GM12878 (cell line): ENCODE measurements at regions of chr3 and their contacts with region 1.

Region 1: GRCh38 chr3:159988617-159989271 is at the start of gene IL12A:
- DNase-seq: peak; percentile 72
- ATAC-seq: peak; percentile 92
- H3K4me3 ChIP-seq: peak within 1 kb of the TSS; percentile 74
- H3K27ac ChIP-seq: peak within 1 kb of the TSS; percentile 75
- H3K4me1 ChIP-seq: peaks cover 17% of the 10 kb centered on the region
- H3K27me3 ChIP-seq: no peaks in the 10 kb centered on the region
- CTCF ChIP-seq: peak; percentile 90 to 96 (median 96)
- EP300 ChIP-seq: no peak
- POLR2A ChIP-seq: peak; percentile 70
- RAD21 ChIP-seq: peak; percentile 76
- polyA plus RNA-seq, gene IL12A: 0.50 to 2.6 TPM

Region 2: GRCh38 chr3:159897331-159898075 is 91.2 kb before region 1 on chr3:
- CTCF ChIA-PET with region 1: interaction called, 284 read pairs
- POLR2A ChIA-PET with region 1: no interaction called
- RAD21 ChIA-PET with region 1: interaction called, 4 read pairs
- SMC1A ChIA-PET with region 1: interaction called, 9 read pairs
- in situ Hi-C with region 1: no loop called
- intact Hi-C with region 1: loop called (anchors 5 kb)
- DNase-seq: no peak
- ATAC-seq: no peak
- H3K4me3 ChIP-seq: no peak overlapping the region
- H3K27ac ChIP-seq: no peak overlapping the region
- H3K4me1 ChIP-seq: peaks cover 9% of the 10 kb centered on the region
- H3K27me3 ChIP-seq: no peaks in the 10 kb centered on the region
- CTCF ChIP-seq: no peak
- EP300 ChIP-seq: no peak
- POLR2A ChIP-seq: no peak
- RAD21 ChIP-seq: no peak

Region 3: DNA sequence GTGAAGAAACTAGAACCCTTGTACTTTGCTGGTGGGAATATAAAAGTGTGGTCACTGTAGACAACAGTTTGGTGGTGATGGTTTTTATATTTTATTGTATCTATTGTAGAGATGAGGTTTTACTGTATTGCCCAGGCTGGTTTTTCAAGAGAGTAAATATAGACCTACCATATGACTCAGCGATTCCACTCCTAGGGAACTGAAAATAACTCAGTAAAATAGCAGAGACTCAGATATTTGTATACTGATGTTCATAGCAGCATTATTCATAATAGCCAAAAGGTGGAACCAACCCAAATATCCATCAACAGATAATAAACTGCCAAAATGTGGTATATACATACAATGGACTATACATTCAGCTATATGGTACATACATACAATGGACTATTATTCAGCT is 68.9 kb before region 1 on chr3:
- CTCF ChIA-PET with region 1: interaction called, 17 read pairs
- POLR2A ChIA-PET with region 1: no interaction called
- RAD21 ChIA-PET with region 1: interaction called, 16 read pairs
- SMC1A ChIA-PET with region 1: interaction called, 15 read pairs
- in situ Hi-C with region 1: no loop called
- intact Hi-C with region 1: loop called (anchors 2 kb)
- DNase-seq: no peak
- ATAC-seq: peak; percentile 81
- H3K4me3 ChIP-seq: no peak overlapping the region
- H3K27ac ChIP-seq: peak overlapping the region; percentile 22; the same call in 1 of the 2 replicates
- H3K4me1 ChIP-seq: peaks cover 46% of the 10 kb centered on the region
- H3K27me3 ChIP-seq: no peaks in the 10 kb centered on the region
- CTCF ChIP-seq: no peak
- EP300 ChIP-seq: peak; percentile 75 to 80; a peak in 3 of 4 replicates
- POLR2A ChIP-seq: no peak
- RAD21 ChIP-seq: 0 out of 2 replicates have a peak, but pooled peaks have one; percentile 2

Region 4: DNA sequence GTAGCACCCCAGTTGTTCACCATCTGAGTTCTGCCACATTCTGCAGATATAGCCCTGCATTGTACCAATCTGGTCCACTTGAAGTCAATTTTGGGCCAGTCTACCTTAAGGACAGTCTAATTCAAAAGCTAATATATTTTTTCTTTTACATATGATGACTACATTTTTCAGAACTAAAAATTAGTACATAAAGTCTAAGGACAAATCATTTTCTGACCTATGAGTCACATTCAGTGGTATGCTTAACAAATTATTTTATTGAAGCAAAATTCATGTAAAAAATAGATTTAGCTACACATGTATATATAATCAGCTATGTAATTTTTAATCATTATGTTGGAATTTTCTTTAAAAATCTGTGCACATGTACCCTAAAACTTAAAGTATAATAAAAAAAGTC is 52.2 kb before region 1 on chr3:
- CTCF ChIA-PET with region 1: interaction called, 4 read pairs
- POLR2A ChIA-PET with region 1: no interaction called
- RAD21 ChIA-PET with region 1: interaction called, 5 read pairs
- SMC1A ChIA-PET with region 1: interaction called, 11 read pairs
- in situ Hi-C with region 1: no loop called
- intact Hi-C with region 1: no loop called
- DNase-seq: no peak
- ATAC-seq: no peak
- H3K4me3 ChIP-seq: no peak overlapping the region
- H3K27ac ChIP-seq: no peak overlapping the region
- H3K4me1 ChIP-seq: peaks cover 6% of the 10 kb centered on the region
- H3K27me3 ChIP-seq: no peaks in the 10 kb centered on the region
- CTCF ChIP-seq: no peak
- EP300 ChIP-seq: no peak
- POLR2A ChIP-seq: no peak
- RAD21 ChIP-seq: no peak

Region 5: DNA sequence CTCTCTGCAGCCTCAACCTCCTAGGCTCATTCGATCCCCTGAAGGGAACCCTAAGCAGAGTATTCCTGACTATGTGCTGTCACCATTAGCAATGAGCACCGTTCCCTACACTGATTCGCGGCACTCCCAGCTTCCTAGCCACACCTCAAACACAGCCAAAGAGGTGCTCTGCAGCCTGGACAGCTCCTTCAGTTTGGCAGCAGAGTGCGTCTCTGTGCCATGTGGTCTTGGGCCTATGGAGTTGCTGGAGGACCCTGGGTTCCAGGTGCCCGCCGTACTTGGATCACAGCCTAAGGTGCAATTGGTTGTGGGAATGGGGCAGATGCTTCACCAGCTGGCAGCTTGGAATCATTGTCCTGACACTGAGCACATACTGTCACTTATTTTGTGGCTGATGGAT is 17.4 kb before region 1 on chr3:
- CTCF ChIA-PET with region 1: interaction called, 75 read pairs
- POLR2A ChIA-PET with region 1: interaction called, 4 read pairs
- RAD21 ChIA-PET with region 1: interaction called, 3 read pairs
- SMC1A ChIA-PET with region 1: interaction called, 44 read pairs
- in situ Hi-C with region 1: no loop called
- intact Hi-C with region 1: no loop called
- DNase-seq: no peak
- ATAC-seq: no peak
- H3K4me3 ChIP-seq: no peak overlapping the region
- H3K27ac ChIP-seq: no peak overlapping the region
- H3K4me1 ChIP-seq: no peaks in the 10 kb centered on the region
- H3K27me3 ChIP-seq: no peaks in the 10 kb centered on the region; a peak in 1 of 4 replicates
- CTCF ChIP-seq: no peak
- EP300 ChIP-seq: no peak
- POLR2A ChIP-seq: no peak
- RAD21 ChIP-seq: no peak

Region 6: DNA sequence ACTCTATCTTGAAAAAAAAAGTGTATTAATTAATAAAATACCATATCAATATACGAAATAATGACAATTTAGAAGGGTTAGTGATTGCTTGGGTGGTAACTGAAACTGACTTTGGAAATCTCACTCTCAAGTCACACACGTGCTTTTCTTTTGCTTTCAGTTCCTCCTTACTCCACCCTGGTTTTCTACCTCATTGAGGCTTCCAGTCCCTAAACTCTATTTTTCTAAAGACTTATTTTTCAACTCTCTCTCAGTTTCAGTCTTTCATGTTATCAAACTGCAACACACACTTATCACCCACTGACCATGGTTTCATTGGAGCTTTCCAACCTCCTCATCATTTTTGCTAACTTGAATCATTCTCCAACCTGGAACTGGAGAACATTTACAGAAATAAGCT is 23.4 kb after region 1 on chr3:
- CTCF ChIA-PET with region 1: interaction called, 288 read pairs
- POLR2A ChIA-PET with region 1: interaction called, 3 read pairs
- RAD21 ChIA-PET with region 1: interaction called, 97 read pairs
- SMC1A ChIA-PET with region 1: interaction called, 24 read pairs
- in situ Hi-C with region 1: no loop called
- intact Hi-C with region 1: no loop called
- DNase-seq: peak; percentile 81
- ATAC-seq: peak; percentile 83
- H3K4me3 ChIP-seq: peak overlapping the region; percentile 22; the same call in 1 of the 2 replicates
- H3K27ac ChIP-seq: peak overlapping the region; percentile 94
- H3K4me1 ChIP-seq: peaks cover 48% of the 10 kb centered on the region
- H3K27me3 ChIP-seq: no peaks in the 10 kb centered on the region
- CTCF ChIP-seq: no peak
- EP300 ChIP-seq: peak; percentile 87 to 95; a peak in 3 of 4 replicates
- POLR2A ChIP-seq: no peak
- RAD21 ChIP-seq: no peak